Activated CD8-positive, alpha-beta T cell treated with anti-CD3 and anti-CD28 coated beads, Interleukin-2, amount 10 ng/mL, durations not matched to agents 7 days and 5 days (primary cell): ENCODE measurements at regions of chr1 and their contacts with region 1.

Region 1: GRCh38 chr1:32801096-32801715 is 16.0 kb downstream of the YARS1 start:
- DNase-seq: peak; percentile 48
- ATAC-seq: peak; percentile 68
- H3K4me3 Mint-ChIP-seq: peak overlapping the region; percentile 4
- H3K27ac Mint-ChIP-seq: peak overlapping the region; percentile 48
- H3K4me1 Mint-ChIP-seq: peaks cover 55% of the 10 kb centered on the region
- H3K27me3 Mint-ChIP-seq: no peaks in the 10 kb centered on the region

Region 2: DNA sequence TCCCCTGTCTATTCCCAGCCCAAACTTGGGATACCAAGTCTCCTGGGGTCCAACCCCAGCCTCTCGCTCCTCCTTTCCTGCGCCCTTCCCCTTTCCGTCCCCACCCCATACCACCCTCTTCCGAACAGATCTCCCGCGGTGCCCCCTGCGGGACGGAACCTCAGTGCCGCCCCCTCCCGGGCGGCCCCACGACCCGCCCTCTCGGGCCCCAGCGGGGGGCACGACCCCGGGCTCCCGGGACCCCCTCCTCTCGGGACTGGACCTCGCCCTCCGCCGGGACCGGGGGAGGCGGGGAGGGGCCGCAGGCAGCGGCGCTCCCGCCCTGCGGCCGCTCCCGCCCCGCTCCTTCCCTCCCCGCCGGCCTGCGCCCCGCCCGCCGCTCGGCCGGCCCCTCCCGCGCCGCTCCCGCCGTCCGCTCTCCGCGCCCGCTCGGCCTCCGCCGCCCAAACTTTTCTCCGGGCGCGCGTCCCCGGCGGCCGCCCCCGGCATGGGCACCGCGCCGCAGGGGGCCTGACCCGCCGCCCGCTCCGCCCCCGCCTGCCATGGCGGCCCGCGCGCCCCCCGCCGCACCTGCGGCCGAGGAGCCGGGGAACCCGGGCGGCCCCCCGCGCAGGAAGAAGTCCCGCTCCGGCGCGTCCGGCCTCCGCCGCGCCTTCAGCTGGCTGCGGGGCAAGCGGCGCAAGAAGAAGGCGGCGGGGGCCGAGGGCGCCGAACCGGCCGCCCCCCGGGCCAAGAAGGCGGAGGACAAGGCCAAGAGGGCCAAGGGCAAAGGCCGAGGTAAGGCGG is 59.6 kb before region 1 on chr1:
- CTCF ChIA-PET with region 1: no interaction called
- POLR2A ChIA-PET with region 1: no interaction called
- DNase-seq: no peak
- ATAC-seq: peak; percentile 66
- H3K4me3 Mint-ChIP-seq: peak overlapping the region; percentile 63
- H3K27ac Mint-ChIP-seq: no peak overlapping the region
- H3K4me1 Mint-ChIP-seq: peaks cover 2% of the 10 kb centered on the region
- H3K27me3 Mint-ChIP-seq: peaks cover 33% of the 10 kb centered on the region

Region 3: DNA sequence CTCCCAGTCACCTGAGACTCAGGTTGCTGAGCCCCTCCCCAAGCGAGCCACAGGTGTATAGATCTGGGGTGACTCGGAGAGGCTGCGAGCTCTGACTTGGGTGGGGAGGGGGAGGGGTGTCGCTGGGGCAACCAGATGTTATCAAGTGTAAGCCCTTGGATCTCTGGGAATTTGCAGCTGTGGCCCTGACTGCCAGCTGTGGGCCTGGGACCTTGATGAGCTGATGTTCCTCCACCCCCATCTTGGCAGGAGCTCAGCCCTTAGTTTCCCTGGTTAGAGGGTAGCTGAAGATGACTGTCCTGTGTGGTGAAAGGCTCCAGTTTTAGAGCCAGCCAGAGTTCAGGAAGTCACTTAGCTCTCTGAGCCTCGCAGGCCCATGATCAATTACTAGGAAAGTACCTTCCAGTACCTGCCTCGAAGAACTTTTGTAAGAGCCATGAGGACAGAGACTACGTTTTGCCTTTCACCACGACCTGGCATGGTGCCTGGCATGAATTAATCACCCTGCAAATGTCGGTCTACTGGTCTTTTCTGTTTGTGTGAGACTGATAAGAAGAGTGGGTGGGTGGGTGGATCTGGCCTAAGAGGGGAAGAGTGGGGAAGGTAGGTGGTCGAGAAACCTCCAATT is 39.8 kb before region 1 on chr1:
- CTCF ChIA-PET with region 1: no interaction called
- POLR2A ChIA-PET with region 1: no interaction called
- DNase-seq: no peak
- ATAC-seq: no peak
- H3K4me3 Mint-ChIP-seq: no peak overlapping the region
- H3K27ac Mint-ChIP-seq: no peak overlapping the region
- H3K4me1 Mint-ChIP-seq: peaks cover 13% of the 10 kb centered on the region
- H3K27me3 Mint-ChIP-seq: peaks cover 4% of the 10 kb centered on the region

Region 4: DNA sequence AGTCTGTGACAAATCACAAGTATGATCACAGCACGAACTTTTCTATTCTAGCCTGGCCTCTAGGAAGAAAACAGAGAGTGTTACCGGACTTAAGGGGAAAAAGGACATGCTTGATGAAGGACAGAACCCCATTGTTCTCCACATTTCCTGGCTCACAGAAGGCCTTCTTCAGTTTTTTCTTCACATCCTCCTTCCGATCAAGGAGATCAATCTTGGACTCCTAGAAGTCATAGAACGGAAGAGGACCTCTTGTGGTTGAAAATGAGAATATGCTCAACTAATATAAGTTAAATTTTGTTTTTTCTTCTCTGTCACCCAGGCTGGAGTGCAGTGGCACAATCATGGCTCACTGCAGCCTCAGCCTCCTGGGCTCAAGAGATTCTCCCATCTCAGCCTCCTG is 14.3 kb before region 1 on chr1:
- CTCF ChIA-PET with region 1: no interaction called
- POLR2A ChIA-PET with region 1: no interaction called
- DNase-seq: no peak
- ATAC-seq: no peak
- H3K4me3 Mint-ChIP-seq: no peak overlapping the region
- H3K27ac Mint-ChIP-seq: no peak overlapping the region
- H3K4me1 Mint-ChIP-seq: peaks cover 3% of the 10 kb centered on the region
- H3K27me3 Mint-ChIP-seq: no peaks in the 10 kb centered on the region

Region 5: GRCh38 chr1:32817159-32817814 is 16.1 kb after region 1 on chr1 and contains the starts of genes S100PBP and YARS1:
- CTCF ChIA-PET with region 1: interaction called, 3 read pairs
- POLR2A ChIA-PET with region 1: interaction called, 22 read pairs
- DNase-seq: peak; percentile 100
- ATAC-seq: peak; percentile 94
- H3K4me3 Mint-ChIP-seq: peak within 1 kb of the TSS; percentile 84
- H3K27ac Mint-ChIP-seq: peak within 1 kb of the TSS; percentile 94
- H3K4me1 Mint-ChIP-seq: peaks cover 55% of the 10 kb centered on the region
- H3K27me3 Mint-ChIP-seq: no peaks in the 10 kb centered on the region
- total RNA-seq, gene S100PBP: 78.3 to 78.9 TPM
- total RNA-seq, gene YARS1: 175 to 189 TPM